HEK293 (cell line): ENCODE measurements at regions of chr2 and their contacts with region 1.

Region 1: GRCh38 chr2:219402665-219403515 is 15.2 kb upstream of the DNPEP start:
- H3K4me3 ChIP-seq: no peak overlapping the region
- H3K27ac ChIP-seq: no peak overlapping the region
- H3K4me1 ChIP-seq: peaks cover 19% of the 10 kb centered on the region
- CTCF ChIP-seq: peak; percentile 69

Region 2: DNA sequence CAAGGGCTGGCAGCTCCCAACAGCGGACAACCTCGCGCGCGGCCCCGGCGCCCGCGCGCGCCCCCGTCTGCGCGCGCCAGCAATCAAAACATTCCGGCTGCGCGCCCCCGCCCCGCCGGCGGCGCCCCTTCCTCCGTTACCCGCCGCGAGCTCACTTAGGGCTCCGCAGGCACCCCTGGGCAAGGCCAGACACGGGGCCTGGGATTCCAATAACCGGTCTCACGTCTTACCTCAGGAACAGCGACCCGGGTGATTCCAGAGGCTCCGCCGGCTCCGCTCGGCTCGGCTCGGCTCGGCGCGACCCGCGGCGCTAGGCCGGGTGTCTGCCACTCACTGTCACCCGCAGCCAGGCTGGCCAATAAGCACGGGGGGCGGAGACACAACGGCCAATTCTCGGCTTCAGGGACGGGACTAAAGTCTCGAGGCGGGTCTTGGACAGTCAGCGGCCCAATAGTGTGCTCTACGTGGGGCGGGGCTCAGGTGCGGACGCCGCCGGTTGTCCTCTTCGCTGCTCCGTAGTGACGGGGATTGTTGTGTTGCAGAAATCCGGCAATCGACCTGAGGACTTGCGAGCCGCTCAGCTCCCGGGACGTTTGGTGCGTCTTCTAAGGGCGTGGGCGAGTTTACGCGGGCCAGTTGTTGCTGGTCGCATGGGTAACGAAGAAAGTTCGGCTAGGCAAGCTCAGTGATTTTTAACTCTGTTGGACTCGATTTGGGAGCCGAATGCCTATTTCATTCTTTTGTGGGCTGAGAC is 173.4 kb before region 1 on chr2 and contains the starts of genes ANKZF1 and ATG9A:
- CTCF ChIA-PET with region 1: no interaction called
- POLR2A ChIA-PET with region 1: no interaction called
- H3K4me3 ChIP-seq: peak within 1 kb of the TSS; percentile 83
- H3K27ac ChIP-seq: peak within 1 kb of the TSS; percentile 81
- H3K4me1 ChIP-seq: peaks cover 4% of the 10 kb centered on the region; the same call in 1 of the 2 replicates
- CTCF ChIP-seq: no peak

Region 3: DNA sequence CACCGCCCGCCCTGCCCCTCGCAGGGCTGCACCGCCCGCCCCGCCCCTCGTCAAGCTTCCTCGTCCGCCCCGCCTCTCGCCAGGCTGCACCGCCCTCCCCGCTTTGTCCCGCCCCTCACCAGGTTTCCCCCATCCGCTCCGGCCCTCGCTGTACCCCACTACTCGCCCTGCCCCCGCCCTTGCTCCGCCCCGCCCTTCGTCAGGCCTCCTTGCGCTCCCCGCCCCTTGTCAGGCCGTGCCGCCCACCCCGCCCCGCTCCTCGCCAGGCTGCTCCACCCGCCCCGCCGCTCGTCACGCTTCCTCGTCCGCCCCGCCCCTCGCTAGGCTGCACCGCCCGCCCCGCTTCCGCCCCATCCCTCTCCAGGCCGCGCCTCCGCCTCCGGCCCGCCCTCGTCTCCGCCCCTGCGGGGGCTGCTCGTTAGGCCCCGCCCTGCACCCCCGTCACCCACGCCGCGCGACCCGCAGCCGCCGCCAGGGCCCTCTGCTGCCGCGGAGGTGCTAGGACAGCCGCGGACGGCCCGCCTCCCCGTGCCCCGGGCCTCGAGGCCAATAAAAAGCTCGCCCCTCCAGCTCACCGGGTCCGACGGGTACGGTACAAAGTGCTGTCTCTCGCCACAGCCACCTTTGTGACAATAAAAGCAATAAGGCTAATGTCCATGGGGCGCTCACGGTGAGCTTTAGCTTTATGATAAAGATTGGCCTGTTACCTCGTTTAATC is 14.6 kb before region 1 on chr2:
- CTCF ChIA-PET with region 1: interaction called, 91 read pairs
- POLR2A ChIA-PET with region 1: interaction called, 3 read pairs
- H3K4me3 ChIP-seq: peak overlapping the region; percentile 37
- H3K27ac ChIP-seq: peak overlapping the region; percentile 52; the same call in 1 of the 2 replicates
- H3K4me1 ChIP-seq: peaks cover 6% of the 10 kb centered on the region
- CTCF ChIP-seq: peak; percentile 53

Region 4: GRCh38 chr2:219430633-219431615 is 28.0 kb after region 1 on chr2:
- CTCF ChIA-PET with region 1: interaction called, 22 read pairs
- POLR2A ChIA-PET with region 1: no interaction called
- H3K4me3 ChIP-seq: no peak overlapping the region
- H3K27ac ChIP-seq: no peak overlapping the region
- H3K4me1 ChIP-seq: no peaks in the 10 kb centered on the region
- CTCF ChIP-seq: peak; percentile 73; the same call in 1 of the 2 replicates

Region 5: DNA sequence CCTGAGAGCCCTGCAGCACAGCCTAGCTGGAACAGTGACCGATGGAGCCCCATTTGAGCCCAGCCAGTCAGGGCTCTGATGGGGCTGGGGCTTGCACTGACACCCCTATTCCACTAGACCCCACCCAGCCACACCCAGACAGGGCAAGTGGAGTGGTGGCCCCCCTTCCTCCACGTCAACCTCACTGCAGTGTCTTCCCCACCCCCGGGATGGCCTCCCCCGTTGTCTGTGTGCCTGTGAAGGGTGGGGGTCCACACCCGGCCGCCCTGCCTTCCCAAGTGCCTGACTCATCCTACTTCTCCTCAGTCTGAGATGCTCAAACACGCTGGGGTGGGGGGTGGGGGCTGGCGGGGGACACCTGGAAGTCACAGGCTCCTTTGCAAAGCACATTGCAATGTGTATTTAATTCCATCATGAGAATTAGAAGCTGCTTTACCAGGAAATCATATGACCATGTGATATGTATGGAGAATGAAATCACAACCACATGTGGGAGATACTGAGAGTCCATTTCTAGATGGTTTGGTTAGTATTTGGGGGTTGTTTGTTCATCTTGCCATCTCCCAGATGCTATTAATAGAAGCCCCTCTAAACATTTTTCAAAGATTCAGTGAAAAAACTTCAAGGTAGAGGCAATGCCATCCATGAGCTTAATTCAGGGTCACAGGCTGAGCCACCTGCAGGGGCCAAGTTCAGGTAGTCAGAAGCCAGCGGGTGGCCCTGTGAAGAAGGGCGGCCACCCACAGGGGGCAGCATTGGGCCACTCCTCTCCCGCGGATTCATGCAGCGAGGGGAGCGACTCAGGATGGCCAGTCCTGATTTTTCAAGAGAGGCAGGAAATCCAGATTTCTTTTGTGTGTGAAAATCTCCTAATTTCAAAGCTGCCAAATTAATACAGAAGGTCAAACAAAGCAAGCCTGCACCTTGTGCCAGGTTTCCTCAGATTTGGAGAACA is 73.1 kb after region 1 on chr2:
- CTCF ChIA-PET with region 1: interaction called, 33 read pairs
- POLR2A ChIA-PET with region 1: no interaction called
- H3K4me3 ChIP-seq: no peak overlapping the region
- H3K27ac ChIP-seq: no peak overlapping the region
- H3K4me1 ChIP-seq: 0 out of 2 replicates have a peak, but pooled peaks cover 2% of the 10 kb centered on the region
- CTCF ChIP-seq: peak; percentile 83

Region 6: DNA sequence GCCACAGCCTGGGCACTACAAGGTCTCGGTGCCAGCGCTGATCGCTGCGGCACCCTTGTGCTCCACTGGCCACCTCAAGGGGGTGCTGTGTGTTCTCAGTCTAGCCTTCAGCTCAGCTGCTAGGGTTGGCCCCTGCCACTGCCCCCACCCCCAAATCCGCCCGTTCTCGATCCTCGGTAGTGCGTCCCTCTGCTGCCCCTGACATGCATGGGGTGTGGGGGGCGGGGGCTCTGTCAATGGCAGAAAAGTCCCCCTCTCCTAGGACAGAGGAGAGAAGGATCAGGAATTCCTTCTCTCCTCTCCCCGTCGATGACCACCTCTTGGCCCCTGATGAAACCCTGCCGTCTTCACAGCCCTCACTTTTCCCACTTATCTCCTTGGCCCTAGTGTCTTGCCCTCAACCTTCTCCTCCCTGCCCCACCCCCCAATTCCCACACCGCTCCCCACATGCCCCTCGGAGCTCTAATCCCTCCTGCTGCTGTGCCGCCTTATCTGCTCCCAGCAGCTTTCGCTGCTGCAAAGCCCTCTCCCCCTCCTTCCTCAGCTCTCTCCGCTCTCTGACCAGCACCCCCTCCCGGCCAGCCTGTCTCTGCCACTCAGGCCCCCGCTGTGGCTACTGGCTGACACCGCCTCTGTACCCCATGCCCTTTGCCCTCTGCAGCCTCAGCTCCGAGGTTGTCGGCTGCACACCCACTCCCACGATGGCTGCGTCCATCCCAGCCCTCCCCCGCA is 107.1 kb after region 1 on chr2:
- CTCF ChIA-PET with region 1: interaction called, 17 read pairs
- POLR2A ChIA-PET with region 1: no interaction called
- H3K4me3 ChIP-seq: peak overlapping the region; percentile 25
- H3K27ac ChIP-seq: no peak overlapping the region
- H3K4me1 ChIP-seq: peaks cover 2% of the 10 kb centered on the region
- CTCF ChIP-seq: peak; percentile 87